A549 (cell line): ENCODE measurements at regions of chr15 and their contacts with region 1.

Region 1: DNA sequence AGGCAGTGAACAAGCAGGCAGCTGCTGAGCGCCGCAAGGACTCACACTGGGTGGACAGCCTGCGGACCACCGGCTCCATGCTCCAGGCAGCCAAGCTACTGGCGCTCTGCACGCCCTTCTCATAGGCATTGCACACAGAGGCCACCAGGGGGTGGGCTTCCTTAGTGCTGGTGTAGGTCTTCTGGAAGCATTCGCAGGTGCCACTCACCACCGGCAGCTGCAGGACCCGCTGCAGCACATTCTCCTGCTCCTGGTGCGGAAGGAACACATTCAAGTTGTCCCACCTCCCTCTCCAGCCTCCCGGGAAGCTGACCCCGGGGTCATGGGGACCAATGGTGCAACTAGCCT is 6.0 kb downstream of the PLIN1 start:
- DNase-seq: peak; percentile 64 to 76
- ATAC-seq: peak; percentile 52 to 93; a peak in 3 of 6 replicates
- H3K4me3 ChIP-seq: no peak overlapping the region
- H3K27ac ChIP-seq: no peak overlapping the region
- H3K4me1 ChIP-seq: no peaks in the 10 kb centered on the region
- CTCF ChIP-seq: peak; percentile 50
- EP300 ChIP-seq: no peak
- POLR2A ChIP-seq: no peak
- RAD21 ChIP-seq: peak in 1 of 2 experiments; percentile 43; a peak in 2 of 5 replicates

Region 2: DNA sequence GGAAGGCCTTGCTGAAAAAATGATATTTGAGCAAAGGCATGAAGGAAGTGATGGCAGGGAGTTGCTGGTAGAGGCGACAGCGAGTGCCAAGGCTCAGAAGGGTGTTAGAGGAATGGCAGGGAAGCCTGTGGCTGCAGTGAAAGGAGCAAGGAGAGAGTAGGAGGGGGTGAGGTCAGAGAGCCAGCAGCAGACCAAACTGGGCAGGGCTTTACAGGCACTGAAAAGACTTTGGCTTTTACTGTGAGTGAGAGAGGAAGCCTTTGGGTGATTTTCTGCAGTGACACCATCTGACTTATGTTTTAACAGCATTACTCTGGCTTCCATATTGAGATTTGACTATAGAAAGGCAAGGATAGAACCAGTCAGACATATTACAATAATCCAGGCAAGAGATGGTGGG is 86.5 kb before region 1 on chr15:
- CTCF ChIA-PET with region 1: no interaction called
- POLR2A ChIA-PET with region 1: no interaction called
- DNase-seq: no peak
- ATAC-seq: no peak
- H3K4me3 ChIP-seq: no peak overlapping the region
- H3K27ac ChIP-seq: no peak overlapping the region
- H3K4me1 ChIP-seq: no peaks in the 10 kb centered on the region
- CTCF ChIP-seq: no peak
- EP300 ChIP-seq: no peak
- POLR2A ChIP-seq: no peak
- RAD21 ChIP-seq: no peak

Region 3: DNA sequence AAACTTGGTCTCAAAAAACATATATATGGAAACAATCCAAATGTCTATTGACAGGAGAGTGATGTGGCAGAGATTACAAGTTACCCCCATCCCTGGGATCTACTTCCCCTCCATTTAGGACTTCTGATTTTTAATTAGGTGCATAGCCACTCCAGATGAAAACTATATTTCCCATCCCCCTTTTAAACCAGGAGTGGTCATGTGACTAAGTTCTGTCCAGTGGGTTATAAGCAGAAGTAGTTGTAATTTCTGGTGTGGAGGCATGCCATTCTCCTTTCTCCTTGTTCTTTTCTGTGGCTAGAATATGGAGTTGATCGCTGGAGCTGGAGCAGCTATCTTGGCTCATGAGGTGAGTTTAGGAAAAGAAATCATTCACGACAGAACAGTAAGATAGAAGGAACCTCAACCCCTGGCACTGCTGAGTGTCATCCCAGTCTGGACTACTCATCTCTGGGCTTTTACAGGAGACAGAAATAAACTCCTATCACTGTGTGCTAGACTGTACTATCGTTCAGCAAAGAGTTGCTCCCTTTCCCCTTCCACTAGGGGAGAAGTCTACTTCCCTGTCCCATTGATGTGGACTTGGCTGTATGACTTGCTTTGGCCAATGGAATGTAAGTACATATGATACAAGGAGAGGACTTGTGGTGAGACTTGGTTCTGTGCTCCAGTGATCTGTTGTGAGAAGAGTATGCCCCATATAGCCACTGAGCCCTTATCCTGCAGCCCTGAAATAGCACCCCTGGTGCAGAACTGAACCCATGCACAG is 12.8 kb before region 1 on chr15:
- CTCF ChIA-PET with region 1: interaction called, 13 read pairs
- POLR2A ChIA-PET with region 1: no interaction called
- DNase-seq: peak in 1 of 2 experiments; percentile 29
- ATAC-seq: peak; percentile 35 to 67; a peak in 5 of 6 replicates
- H3K4me3 ChIP-seq: no peak overlapping the region
- H3K27ac ChIP-seq: no peak overlapping the region
- H3K4me1 ChIP-seq: peaks cover 5% of the 10 kb centered on the region; the same call in 1 of the 3 replicates
- CTCF ChIP-seq: no peak
- EP300 ChIP-seq: no peak
- POLR2A ChIP-seq: no peak
- RAD21 ChIP-seq: no peak